ENCODE measurements at regions of chr12 and their contacts with region 1.

Region 1: GRCh38 chr12:79549497-79550271 is 141.1 kb downstream of the PAWR start:
- DNase-seq: no peak

Region 2: GRCh38 chr12:79415746-79416435 is 133.8 kb before region 1 on chr12:
- in situ Hi-C with region 1: loop called (anchors 5 kb)
- DNase-seq: peak; percentile 60